Gastrocnemius medialis (tissue), 4 donors: ENCODE measurements at regions of chr10 and their contacts with region 1.

Region 1: DNA sequence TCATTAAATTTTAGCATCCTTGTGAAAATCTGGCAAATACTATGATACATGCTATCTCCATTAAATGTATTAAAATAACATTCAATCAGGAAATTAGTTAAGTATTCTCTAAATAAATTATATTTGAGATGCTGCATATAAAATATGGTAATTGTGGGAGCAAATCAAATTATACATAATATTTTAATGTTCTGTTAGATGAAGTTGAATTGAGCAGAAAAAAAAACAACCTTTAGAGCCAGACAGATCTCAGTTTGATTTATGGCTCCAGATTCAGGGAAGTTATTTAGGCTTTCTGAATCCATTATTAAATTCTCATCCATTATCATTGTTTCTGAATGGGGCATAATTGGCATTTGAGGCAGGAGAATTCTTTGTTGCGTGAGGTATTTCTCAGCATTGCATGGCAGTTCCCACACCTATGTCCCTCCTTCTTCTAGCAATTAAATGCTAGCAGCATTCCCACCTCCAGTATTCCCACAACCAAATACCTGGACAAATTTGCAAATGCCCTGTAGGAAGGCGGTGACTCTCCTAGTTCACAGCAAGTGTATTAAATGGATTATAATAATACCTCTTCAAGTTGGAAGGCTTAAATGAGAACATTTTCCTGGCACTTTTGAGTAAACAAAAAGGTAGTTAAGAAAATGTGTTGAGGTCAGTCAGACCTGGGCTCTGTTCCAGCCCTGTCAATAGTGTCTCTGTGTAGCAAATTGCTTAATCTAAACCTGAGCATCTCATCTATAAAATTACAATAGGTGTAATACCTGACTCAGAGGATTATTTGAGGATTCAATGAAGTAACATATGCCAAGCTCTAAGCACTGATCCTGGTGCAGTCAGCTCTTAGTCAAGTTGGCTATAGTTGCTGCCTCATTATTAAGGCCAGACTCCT is 108.9 kb downstream of the RNLS start:
- DNase-seq: peak; percentile 64 to 71
- ATAC-seq: peak; percentile 66 to 77
- H3K4me3 ChIP-seq: peak overlapping the region in 3 of 4 donors; percentile 6 to 29 (median 21)
- H3K27ac ChIP-seq: peak overlapping the region; percentile 80 to 88 (median 83)
- H3K4me1 ChIP-seq: peaks cover 22 to 43% of the 10 kb centered on the region in 2 donors
- H3K27me3 ChIP-seq: no peaks in the 10 kb centered on the region
- CTCF ChIP-seq: no peak
- POLR2A ChIP-seq: peak in 1 of 2 donors; percentile 4

Region 2: GRCh38 chr10:87523731-87524130 is 950.5 kb before region 1 on chr10:
- in situ Hi-C with region 1: no loop called
- intact Hi-C with region 1: no loop called
- DNase-seq: no peak
- ATAC-seq: no peak
- H3K4me3 ChIP-seq: no peak overlapping the region
- H3K27ac ChIP-seq: peak overlapping the region in 3 of 4 donors; percentile 7 to 36 (median 27)
- H3K4me1 ChIP-seq: peaks cover 6 to 10% of the 10 kb centered on the region in 2 donors
- H3K27me3 ChIP-seq: no peaks in the 10 kb centered on the region
- CTCF ChIP-seq: no peak
- POLR2A ChIP-seq: no peak

Region 3: DNA sequence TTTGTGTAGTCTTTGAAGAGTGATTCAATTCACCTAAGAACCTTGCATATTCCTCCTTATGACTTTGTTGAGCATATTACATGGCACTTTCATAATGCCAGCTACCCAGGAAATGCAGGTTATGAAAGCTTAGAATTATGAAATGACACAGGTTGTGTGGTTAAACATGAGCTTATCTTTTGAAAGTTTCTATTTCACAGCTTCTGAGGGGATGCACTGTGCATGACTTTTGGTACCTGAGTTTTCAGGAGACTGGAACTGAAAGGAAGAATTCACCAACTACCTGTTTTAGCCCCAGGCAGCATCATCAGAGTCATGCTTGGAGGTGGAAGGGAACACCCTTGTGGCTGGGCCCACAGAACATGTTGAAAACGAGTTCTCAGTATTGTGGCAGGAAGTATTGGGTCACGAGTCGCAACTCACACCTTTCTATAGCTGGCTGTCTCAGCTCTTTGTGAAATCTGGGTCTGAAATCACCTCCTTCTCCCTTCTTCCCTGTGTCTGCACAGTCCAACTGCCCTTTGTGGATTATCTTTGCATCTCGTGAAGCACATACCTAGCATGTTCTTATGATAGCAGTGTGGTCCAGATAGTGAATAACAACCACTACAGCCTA is 382.6 kb before region 1 on chr10:
- in situ Hi-C with region 1: no loop called
- intact Hi-C with region 1: loop called (anchors 5 kb)
- DNase-seq: peak in 1 of 2 donors; percentile 18
- ATAC-seq: peak in 1 of 2 donors; percentile 31
- H3K4me3 ChIP-seq: no peak overlapping the region
- H3K27ac ChIP-seq: no peak overlapping the region
- H3K4me1 ChIP-seq: no peaks in the 10 kb centered on the region
- H3K27me3 ChIP-seq: no peaks in the 10 kb centered on the region
- CTCF ChIP-seq: no peak
- POLR2A ChIP-seq: no peak

Region 4: DNA sequence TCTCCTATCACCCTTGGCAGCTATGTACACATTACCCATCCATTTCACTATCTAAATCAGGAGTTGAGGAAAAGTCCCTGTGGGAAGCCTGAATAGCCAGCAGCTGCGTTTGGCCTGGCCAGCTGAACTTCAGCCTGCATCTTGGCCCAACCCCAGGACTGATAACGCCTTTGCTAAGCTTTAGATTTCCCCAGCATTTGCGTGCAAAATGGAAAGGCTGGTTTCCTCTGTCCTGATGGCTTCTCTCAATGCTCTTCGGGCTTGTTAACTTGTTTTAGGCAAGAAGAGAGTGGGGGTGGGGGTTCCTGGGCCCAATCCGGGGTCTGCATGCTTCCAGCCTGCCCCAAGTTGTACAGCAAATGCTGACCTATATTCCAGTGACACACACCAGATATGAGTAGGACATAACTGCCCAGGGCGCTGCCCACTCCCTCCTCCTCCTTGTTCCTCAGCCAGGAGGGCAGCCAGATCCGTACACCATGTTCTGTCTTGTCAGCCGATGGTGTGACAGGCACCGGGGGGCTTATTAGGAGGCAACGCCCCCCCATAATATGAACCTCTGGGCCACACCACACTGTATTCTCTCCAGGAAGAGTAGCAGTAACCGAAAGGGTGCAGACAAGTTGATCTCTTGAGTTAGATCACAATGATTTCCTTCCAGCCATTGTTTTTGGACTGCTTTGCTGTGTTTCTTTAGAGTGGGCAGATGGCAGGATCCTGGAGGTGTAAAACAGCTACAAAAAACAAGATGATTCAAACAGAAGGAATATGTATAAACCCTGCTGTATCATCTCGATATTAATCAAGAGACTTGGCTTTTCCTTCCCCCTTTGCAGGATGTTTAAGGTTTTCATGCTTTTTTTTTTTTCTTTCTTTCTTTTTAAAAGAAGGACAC is 230.2 kb before region 1 on chr10:
- in situ Hi-C with region 1: no loop called
- intact Hi-C with region 1: loop called (anchors 5 kb)
- DNase-seq: peak; percentile 76 to 88
- ATAC-seq: peak; percentile 85 to 86
- H3K4me3 ChIP-seq: peak overlapping the region; percentile 29 to 58 (median 32)
- H3K27ac ChIP-seq: peak overlapping the region; percentile 83 to 87 (median 84)
- H3K4me1 ChIP-seq: peaks cover 42 to 64% of the 10 kb centered on the region in 2 donors
- H3K27me3 ChIP-seq: no peaks in the 10 kb centered on the region
- CTCF ChIP-seq: no peak
- POLR2A ChIP-seq: peak; percentile 9 to 12

Region 5: GRCh38 chr10:88417387-88418030 is 56.7 kb before region 1 on chr10:
- in situ Hi-C with region 1: loop called in 1 of 4 experiments (anchors 5 kb)
- intact Hi-C with region 1: loop called (anchors 5 kb)
- DNase-seq: no peak
- ATAC-seq: no peak
- H3K4me3 ChIP-seq: no peak overlapping the region
- H3K27ac ChIP-seq: peak overlapping the region; percentile 15 to 84 (median 80)
- H3K4me1 ChIP-seq: peaks cover 29 to 41% of the 10 kb centered on the region in 2 donors
- H3K27me3 ChIP-seq: no peaks in the 10 kb centered on the region
- CTCF ChIP-seq: no peak
- POLR2A ChIP-seq: no peak

Region 6: DNA sequence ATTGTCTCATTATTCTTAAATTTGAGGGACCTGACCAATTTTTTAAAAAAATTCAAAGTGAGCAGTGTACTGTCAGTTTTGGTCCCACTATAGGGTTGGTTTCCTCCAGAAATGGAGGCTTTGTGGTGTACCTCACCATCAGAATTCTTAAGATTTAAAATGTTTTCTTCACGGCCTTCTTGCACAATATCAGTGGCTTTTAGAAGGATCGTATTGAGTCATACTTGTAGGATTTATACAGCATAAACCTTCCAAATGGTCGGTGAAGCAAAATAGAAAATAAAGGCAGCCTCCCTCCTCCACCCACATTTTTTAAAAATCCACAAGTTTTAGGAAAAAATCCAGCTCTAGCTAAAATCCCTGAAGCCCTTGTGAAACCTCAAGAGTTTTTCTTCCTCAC is 17.5 kb before region 1 on chr10:
- in situ Hi-C with region 1: no loop called
- intact Hi-C with region 1: loop called (anchors 2 kb)
- DNase-seq: no peak
- ATAC-seq: no peak
- H3K4me3 ChIP-seq: no peak overlapping the region
- H3K27ac ChIP-seq: peak overlapping the region; percentile 35 to 67 (median 54)
- H3K4me1 ChIP-seq: peaks cover 15 to 38% of the 10 kb centered on the region in 2 donors
- H3K27me3 ChIP-seq: no peaks in the 10 kb centered on the region
- CTCF ChIP-seq: no peak
- POLR2A ChIP-seq: no peak